ENCODE measurements at regions of chr10 and their contacts with region 1.

Region 1: GRCh38 chr10:68727146-68727545 is 6.1 kb downstream of the CCAR1 start:
- DNase-seq: no peak
- ATAC-seq: no peak
- H3K4me3 ChIP-seq: no peak overlapping the region
- H3K27ac ChIP-seq: no peak overlapping the region
- H3K4me1 ChIP-seq: no peaks in the 10 kb centered on the region
- H3K27me3 ChIP-seq: no peaks in the 10 kb centered on the region
- CTCF ChIP-seq: no peak
- POLR2A ChIP-seq: no peak
- RAD21 ChIP-seq: no peak

Region 2: GRCh38 chr10:68759967-68760366 is 32.8 kb after region 1 on chr10:
- CTCF ChIA-PET with region 1: no interaction called
- POLR2A ChIA-PET with region 1: no interaction called
- dilution Hi-C with region 1: no loop called
- in situ Hi-C with region 1: no loop called
- intact Hi-C with region 1: loop called (anchors 5 kb)
- DNase-seq: no peak
- ATAC-seq: no peak
- H3K4me3 ChIP-seq: no peak overlapping the region
- H3K27ac ChIP-seq: no peak overlapping the region; the same call in 1 of the 2 replicates
- H3K4me1 ChIP-seq: no peaks in the 10 kb centered on the region
- H3K27me3 ChIP-seq: no peaks in the 10 kb centered on the region
- CTCF ChIP-seq: no peak
- POLR2A ChIP-seq: no peak
- RAD21 ChIP-seq: no peak

Region 3: DNA sequence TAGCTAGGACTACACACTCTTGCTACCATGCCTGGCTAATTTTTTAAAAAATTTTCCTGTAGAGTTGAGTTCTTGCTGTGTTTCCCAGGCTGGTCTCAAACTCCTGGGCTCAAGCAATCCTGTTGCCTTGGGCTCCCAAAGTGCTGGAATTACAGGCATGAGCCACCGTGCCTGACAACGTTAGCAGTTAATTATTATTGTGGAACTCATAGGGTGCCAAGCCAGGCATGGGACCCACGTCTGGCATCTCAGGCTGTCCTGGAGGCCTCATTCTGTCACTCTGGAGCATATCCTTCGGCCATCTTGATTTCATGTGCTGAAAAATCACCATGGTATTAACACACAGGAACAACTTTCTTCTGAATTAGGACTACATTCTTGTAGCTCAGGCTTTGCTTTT is 121.6 kb after region 1 on chr10:
- CTCF ChIA-PET with region 1: no interaction called
- POLR2A ChIA-PET with region 1: no interaction called
- dilution Hi-C with region 1: no loop called
- in situ Hi-C with region 1: no loop called
- intact Hi-C with region 1: no loop called
- DNase-seq: no peak
- ATAC-seq: no peak
- H3K4me3 ChIP-seq: no peak overlapping the region
- H3K27ac ChIP-seq: no peak overlapping the region
- H3K4me1 ChIP-seq: no peaks in the 10 kb centered on the region
- H3K27me3 ChIP-seq: peaks cover 2% of the 10 kb centered on the region
- CTCF ChIP-seq: no peak
- POLR2A ChIP-seq: no peak
- RAD21 ChIP-seq: no peak

Region 4: DNA sequence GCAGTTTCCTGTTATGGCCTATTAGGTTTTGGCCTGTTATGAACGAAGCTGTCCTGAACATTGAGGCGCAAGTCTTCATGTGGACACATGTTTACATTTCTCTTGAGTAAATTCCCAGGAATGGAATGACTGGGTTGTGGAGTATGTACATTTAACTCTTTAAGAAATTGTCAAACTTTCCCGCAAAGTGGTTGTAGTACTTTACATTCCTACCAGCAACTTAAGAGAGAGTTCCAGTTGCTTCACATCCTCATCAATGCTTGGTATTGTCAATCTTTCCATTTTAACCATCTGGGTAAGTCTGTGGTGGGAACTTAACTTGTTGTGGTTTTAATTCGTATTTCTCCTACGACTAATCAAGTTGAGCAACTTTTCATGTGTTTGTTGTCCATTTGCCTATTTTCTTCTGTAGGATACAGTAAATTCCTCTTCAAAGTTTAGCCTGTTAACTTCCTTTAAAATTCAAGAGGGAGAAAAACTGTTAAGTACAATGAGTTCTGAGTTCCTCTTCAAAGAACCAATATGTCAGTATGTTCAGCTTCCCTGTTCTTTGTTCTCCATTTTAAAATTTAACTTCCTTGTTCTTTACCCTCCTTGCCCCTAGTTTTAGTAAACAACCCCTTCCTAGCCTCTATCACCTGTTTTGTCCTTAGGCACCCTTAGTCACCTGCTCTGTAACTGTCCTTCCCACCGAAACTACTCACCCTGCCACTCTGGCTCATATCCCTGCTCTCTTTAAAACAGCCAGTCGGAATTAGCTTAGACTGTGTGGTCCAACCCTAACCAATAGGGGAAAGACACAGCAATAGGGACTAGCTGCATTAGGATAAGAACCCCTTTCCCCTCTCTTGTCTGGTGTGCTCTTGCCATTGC is 976.9 kb after region 1 on chr10:
- CTCF ChIA-PET with region 1: no interaction called
- POLR2A ChIA-PET with region 1: interaction called, 11 read pairs
- dilution Hi-C with region 1: no loop called
- in situ Hi-C with region 1: no loop called
- intact Hi-C with region 1: no loop called
- DNase-seq: peak; percentile 96
- ATAC-seq: peak; percentile 93
- H3K4me3 ChIP-seq: no peak overlapping the region
- H3K27ac ChIP-seq: peak overlapping the region; percentile 63; the same call in 1 of the 2 replicates
- H3K4me1 ChIP-seq: peaks cover 8% of the 10 kb centered on the region
- H3K27me3 ChIP-seq: peaks cover 11% of the 10 kb centered on the region; the same call in 1 of the 2 replicates
- CTCF ChIP-seq: peak; percentile 26; the same call in 1 of the 2 replicates
- POLR2A ChIP-seq: no peak
- RAD21 ChIP-seq: no peak